CD4-positive, alpha-beta T cell (primary cell): ENCODE measurements at regions of chr2 and their contacts with region 1.

Region 1: GRCh38 chr2:70115646-70116442 is 28.6 kb downstream of the PCBP1 start:
- DNase-seq: peak in 3 of 14 experiments; percentile 47 to 55 (median 54)
- ATAC-seq: peak; percentile 48
- H3K4me3 ChIP-seq: no peak overlapping the region
- H3K4me3 Mint-ChIP-seq: peak overlapping the region; percentile 65
- H3K27ac ChIP-seq: no peak overlapping the region
- H3K27ac Mint-ChIP-seq: peak overlapping the region; percentile 64
- H3K4me1 ChIP-seq: peaks cover 44% of the 10 kb centered on the region
- H3K4me1 Mint-ChIP-seq: peaks cover 62% of the 10 kb centered on the region
- H3K27me3 ChIP-seq: no peaks in the 10 kb centered on the region
- H3K27me3 Mint-ChIP-seq: no peaks in the 10 kb centered on the region
- CTCF ChIP-seq: no peak

Region 2: DNA sequence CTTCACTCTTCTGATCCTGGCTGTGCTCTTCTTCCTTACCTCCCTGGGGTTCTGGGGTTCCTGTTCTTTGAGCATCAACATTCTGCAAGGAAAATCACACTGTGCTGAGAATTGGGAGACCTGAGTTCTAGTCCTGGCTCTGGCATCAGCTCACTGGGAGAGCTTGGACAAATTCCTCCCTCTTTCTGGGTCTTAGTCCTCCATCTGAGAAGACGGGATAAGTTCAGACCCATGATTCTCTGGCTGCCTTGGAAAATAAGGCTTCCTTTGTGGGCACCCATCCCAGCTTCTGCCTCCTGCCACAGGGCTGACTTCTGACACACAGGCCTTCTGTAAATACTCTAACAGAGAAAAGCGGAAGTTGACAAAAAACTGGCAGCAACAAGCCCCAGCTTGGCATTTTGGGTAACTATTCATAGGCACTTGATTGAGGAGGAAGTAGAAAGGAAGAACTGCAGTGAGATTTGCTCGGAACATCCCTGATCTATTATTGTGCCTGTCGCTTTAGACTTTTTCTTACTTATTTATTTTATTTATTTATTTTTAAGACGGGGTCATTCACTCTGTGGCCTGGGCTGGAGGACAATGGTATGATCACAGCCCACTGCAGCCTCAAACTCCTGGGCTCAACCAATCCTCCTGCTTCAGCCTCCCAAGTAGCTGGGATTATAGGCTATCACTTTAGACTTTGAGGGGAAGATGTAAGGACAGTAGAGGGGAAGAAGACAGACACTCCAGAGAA is 20.7 kb before region 1 on chr2:
- CTCF ChIA-PET with region 1: no interaction called
- POLR2A ChIA-PET with region 1: interaction called, 657 read pairs
- intact Hi-C with region 1: no loop called
- DNase-seq: peak in 11 of 14 experiments; percentile 36 to 89 (median 53)
- ATAC-seq: peak; percentile 93
- H3K4me3 ChIP-seq: peak overlapping the region; percentile 43
- H3K4me3 Mint-ChIP-seq: peak overlapping the region; percentile 83
- H3K27ac ChIP-seq: peak overlapping the region; percentile 74 to 80
- H3K27ac Mint-ChIP-seq: peak overlapping the region; percentile 96
- H3K4me1 ChIP-seq: peaks cover 57% of the 10 kb centered on the region
- H3K4me1 Mint-ChIP-seq: peaks cover 46% of the 10 kb centered on the region
- H3K27me3 ChIP-seq: no peaks in the 10 kb centered on the region
- H3K27me3 Mint-ChIP-seq: no peaks in the 10 kb centered on the region
- CTCF ChIP-seq: no peak

Region 3: DNA sequence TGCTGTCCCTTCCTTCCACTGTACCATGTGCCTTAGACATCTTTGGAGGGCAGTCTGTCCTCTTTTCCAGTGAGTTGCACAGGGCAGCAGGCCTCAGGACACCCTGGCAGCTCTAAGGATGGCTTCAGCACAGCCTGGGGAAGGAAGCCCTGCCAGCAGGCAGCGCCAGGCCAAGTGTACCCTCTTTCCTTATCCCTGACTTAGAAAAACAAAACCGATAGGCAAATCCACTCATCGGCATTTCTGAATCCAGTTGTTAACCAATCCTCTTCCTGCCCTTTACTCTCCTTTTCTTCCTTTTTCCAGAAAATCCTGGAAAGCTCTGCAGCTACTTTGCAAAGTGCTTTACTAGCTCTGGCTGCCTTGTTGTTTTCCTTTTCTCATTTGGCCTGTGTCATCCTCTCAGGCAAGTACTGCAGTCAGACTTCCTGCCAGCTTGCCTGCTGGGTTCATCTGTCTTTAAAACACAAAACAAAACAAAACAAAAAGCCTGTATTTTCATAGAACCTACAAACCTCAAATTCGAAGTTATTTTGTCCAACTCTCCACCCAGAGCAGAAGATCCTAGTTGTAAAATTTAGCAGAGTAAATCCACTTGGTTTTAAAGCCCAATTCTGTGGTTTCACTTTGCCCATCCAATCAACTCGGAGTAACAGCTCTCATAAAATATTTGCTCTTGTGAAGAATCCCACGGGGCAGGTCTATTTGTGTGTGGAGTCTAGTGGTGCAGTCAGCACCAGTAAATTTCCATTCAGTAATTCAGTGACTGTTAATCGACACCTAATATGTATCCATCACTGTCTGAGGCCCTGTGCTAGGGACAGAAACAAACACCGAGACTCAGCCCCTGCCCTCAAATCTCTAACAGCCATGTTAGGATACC is 16.6 kb after region 1 on chr2:
- CTCF ChIA-PET with region 1: interaction called, 7 read pairs
- POLR2A ChIA-PET with region 1: interaction called, 232 read pairs
- intact Hi-C with region 1: no loop called
- DNase-seq: peak in 8 of 14 experiments; percentile 34 to 80 (median 60)
- ATAC-seq: peak; percentile 62
- H3K4me3 ChIP-seq: peak overlapping the region; percentile 54
- H3K4me3 Mint-ChIP-seq: peak overlapping the region; percentile 83
- H3K27ac ChIP-seq: peak overlapping the region; percentile 76 to 84
- H3K27ac Mint-ChIP-seq: peak overlapping the region; percentile 96
- H3K4me1 ChIP-seq: peaks cover 88% of the 10 kb centered on the region
- H3K4me1 Mint-ChIP-seq: peaks cover 72% of the 10 kb centered on the region
- H3K27me3 ChIP-seq: no peaks in the 10 kb centered on the region
- H3K27me3 Mint-ChIP-seq: no peaks in the 10 kb centered on the region
- CTCF ChIP-seq: no peak

Region 4: GRCh38 chr2:70173520-70173919 is 57.7 kb after region 1 on chr2:
- CTCF ChIA-PET with region 1: no interaction called
- POLR2A ChIA-PET with region 1: no interaction called
- intact Hi-C with region 1: no loop called
- DNase-seq: no peak
- ATAC-seq: no peak
- H3K4me3 ChIP-seq: no peak overlapping the region
- H3K4me3 Mint-ChIP-seq: no peak overlapping the region
- H3K27ac ChIP-seq: no peak overlapping the region
- H3K27ac Mint-ChIP-seq: no peak overlapping the region
- H3K4me1 ChIP-seq: no peaks in the 10 kb centered on the region
- H3K4me1 Mint-ChIP-seq: no peaks in the 10 kb centered on the region
- H3K27me3 ChIP-seq: no peaks in the 10 kb centered on the region
- H3K27me3 Mint-ChIP-seq: no peaks in the 10 kb centered on the region
- CTCF ChIP-seq: no peak

Region 5: DNA sequence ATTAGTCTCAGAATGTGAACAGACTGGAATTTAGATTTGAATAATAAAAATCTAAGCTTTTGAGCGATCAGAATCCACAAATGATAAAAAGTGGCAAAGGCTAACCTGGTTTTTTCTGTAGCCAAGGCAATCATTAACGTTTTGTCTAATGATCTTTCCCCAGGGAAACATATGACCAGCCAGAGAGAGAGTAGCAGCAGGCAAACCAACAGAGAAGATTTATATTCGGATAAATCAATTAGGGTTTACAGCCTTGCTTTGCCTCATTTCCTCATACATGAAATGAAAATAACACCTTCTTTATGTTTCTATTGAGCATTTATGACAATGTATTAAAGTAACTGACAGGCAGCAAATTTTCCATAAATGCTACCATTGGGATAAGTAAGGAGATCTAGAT is 118.1 kb after region 1 on chr2:
- CTCF ChIA-PET with region 1: no interaction called
- POLR2A ChIA-PET with region 1: no interaction called
- intact Hi-C with region 1: no loop called
- DNase-seq: no peak
- ATAC-seq: no peak
- H3K4me3 ChIP-seq: no peak overlapping the region
- H3K4me3 Mint-ChIP-seq: no peak overlapping the region
- H3K27ac ChIP-seq: no peak overlapping the region
- H3K27ac Mint-ChIP-seq: peak overlapping the region; percentile 13
- H3K4me1 ChIP-seq: no peaks in the 10 kb centered on the region
- H3K4me1 Mint-ChIP-seq: no peaks in the 10 kb centered on the region
- H3K27me3 ChIP-seq: no peaks in the 10 kb centered on the region
- H3K27me3 Mint-ChIP-seq: no peaks in the 10 kb centered on the region
- CTCF ChIP-seq: no peak